Natural killer cell (primary cell): ENCODE measurements at regions of chr1 and their contacts with region 1.

Region 1: GRCh38 chr1:27395441-27396195 is 3.2 kb downstream of the GPR3 start:
- DNase-seq: peak; percentile 76 to 90
- ATAC-seq: peak; percentile 31 to 61 (median 32)
- H3K4me3 ChIP-seq: no peak overlapping the region
- H3K4me3 Mint-ChIP-seq: peak overlapping the region; percentile 17
- H3K27ac ChIP-seq: no peak overlapping the region
- H3K27ac Mint-ChIP-seq: peak overlapping the region; percentile 36 to 98
- H3K4me1 ChIP-seq: peaks cover 23% of the 10 kb centered on the region
- H3K4me1 Mint-ChIP-seq: peaks cover 11 to 24% of the 10 kb centered on the region in 2 donors
- H3K27me3 ChIP-seq: no peaks in the 10 kb centered on the region
- H3K27me3 Mint-ChIP-seq: peaks cover 6 to 7% of the 10 kb centered on the region in 2 donors
- CTCF ChIP-seq: peak; percentile 92

Region 2: GRCh38 chr1:27300341-27301051 is 95.1 kb before region 1 on chr1:
- intact Hi-C with region 1: loop called (anchors 1 kb)
- DNase-seq: peak; percentile 77 to 94
- ATAC-seq: peak; percentile 91 to 98 (median 91)
- H3K4me3 ChIP-seq: no peak overlapping the region
- H3K4me3 Mint-ChIP-seq: no peak overlapping the region
- H3K27ac ChIP-seq: no peak overlapping the region
- H3K27ac Mint-ChIP-seq: no peak overlapping the region
- H3K4me1 ChIP-seq: peaks cover 18% of the 10 kb centered on the region
- H3K4me1 Mint-ChIP-seq: peaks cover 6 to 7% of the 10 kb centered on the region in 2 donors
- H3K27me3 ChIP-seq: no peaks in the 10 kb centered on the region
- H3K27me3 Mint-ChIP-seq: no peaks in the 10 kb centered on the region
- CTCF ChIP-seq: peak; percentile 91

Region 3: DNA sequence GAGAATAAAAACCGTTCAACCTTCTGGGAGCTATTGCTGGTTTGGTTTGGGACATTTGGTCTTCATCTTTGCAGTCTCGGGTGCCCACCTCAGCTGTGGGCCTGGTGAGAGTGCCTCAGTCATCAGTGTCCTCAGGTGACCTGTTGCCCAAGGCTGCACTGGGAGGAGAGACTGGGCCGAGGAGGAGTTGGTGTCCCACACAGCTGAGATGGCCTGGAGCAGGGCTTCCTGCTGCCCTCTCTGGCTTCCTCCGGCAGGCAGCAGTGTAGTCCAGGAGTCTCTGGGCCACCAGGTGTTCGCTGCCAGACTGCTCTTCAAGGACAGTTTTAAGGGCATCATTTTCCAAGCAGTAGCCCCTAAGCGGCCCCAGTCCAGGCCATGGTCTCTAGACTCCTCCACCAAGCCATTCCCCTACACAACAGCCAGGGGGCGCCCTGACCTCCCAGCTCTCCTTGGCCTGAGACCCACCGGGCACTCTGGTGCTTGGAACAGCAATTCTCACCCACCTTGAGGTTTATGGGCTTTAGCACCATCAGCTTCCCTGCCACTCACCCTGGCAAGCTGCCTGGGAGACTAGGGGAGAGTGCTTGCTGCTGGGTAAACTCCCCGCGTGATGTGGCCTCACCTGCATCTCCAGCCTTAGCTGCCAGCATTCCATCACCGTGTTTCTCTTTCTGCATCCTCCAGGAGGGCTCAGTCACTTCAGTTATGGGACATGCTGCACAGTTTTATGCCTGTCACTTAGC is 62.9 kb before region 1 on chr1:
- intact Hi-C with region 1: loop called (anchors 2 kb)
- DNase-seq: peak; percentile 65 to 82
- ATAC-seq: peak; percentile 82 to 96 (median 92)
- H3K4me3 ChIP-seq: no peak overlapping the region
- H3K4me3 Mint-ChIP-seq: peak overlapping the region; percentile 35
- H3K27ac ChIP-seq: no peak overlapping the region
- H3K27ac Mint-ChIP-seq: peak overlapping the region; percentile 69 to 78
- H3K4me1 ChIP-seq: peaks cover 21% of the 10 kb centered on the region
- H3K4me1 Mint-ChIP-seq: peaks cover 33 to 42% of the 10 kb centered on the region in 2 donors
- H3K27me3 ChIP-seq: no peaks in the 10 kb centered on the region
- H3K27me3 Mint-ChIP-seq: no peaks in the 10 kb centered on the region
- CTCF ChIP-seq: peak; percentile 89